ENCODE measurements at regions of chr10 and their contacts with region 1.

Region 1: DNA sequence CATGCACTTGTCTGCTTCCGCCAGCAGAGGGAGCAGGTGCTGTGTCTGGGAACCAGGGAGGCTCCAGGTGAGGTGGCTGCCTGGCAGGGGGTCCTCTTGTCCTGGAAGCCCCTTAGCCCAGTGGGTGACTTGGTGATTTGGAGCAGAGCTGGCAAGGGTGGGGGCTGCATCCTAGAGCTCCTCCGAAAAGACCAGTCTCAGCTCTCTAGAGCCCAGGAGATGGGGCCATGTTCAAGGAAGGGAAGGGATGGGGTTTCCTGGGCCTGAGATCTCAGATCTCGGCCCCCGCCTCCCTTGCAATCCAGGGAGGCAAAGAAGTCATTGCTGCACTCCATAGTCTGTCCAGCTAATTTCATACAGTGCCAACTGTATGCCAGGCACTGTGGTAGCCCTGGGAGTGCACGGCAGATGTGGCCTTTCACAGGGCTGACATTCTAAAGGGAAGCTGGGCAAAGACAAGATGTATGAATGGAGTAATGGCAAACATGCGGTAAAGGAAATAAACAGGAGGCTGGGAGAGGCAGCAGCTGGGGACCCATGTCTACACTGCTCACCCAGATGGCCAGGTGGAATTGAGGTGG is 20.4 kb upstream of the SFRP5 start:
- DNase-seq: peak; percentile 64
- H3K4me3 ChIP-seq: no peak overlapping the region
- H3K27ac ChIP-seq: no peak overlapping the region
- H3K4me1 ChIP-seq: no peaks in the 10 kb centered on the region
- H3K27me3 ChIP-seq: peaks cover 11% of the 10 kb centered on the region

Region 2: DNA sequence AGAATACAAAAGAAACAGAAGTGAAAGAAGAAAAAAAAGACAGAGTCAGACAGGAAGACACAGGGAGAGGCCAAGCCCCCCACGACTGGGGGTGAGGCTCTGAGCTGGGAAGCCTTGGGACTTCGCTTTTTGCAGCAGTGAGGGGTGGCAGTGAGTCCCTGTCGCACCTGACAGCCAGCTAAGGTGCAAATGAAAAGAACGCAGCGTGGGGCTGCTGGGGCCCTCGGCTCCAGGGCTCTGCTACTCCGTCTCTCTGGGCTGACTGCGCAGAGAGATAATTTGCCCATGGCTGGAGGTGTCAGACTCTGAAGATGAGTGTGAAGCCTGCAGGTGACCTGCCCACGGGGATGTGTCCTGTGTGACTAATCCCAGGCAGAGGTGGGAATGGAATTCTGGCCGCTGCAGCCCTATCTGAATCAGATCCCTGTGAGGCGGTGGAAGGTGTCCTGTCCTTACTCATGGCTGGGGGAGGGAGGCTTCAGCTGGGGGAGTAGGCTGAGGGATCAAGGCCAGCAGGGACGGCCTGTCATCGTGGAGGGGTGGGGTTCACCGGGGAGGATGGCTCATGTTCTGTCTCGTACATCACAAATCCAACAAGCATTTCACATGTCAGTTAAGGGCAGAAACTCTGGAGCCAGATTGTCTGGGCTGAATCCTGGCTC is 702.9 kb before region 1 on chr10:
- in situ Hi-C with region 1: no loop called
- DNase-seq: peak; percentile 51
- H3K4me3 ChIP-seq: no peak overlapping the region
- H3K27ac ChIP-seq: no peak overlapping the region
- H3K4me1 ChIP-seq: no peaks in the 10 kb centered on the region
- H3K27me3 ChIP-seq: peaks cover 14% of the 10 kb centered on the region

Region 3: DNA sequence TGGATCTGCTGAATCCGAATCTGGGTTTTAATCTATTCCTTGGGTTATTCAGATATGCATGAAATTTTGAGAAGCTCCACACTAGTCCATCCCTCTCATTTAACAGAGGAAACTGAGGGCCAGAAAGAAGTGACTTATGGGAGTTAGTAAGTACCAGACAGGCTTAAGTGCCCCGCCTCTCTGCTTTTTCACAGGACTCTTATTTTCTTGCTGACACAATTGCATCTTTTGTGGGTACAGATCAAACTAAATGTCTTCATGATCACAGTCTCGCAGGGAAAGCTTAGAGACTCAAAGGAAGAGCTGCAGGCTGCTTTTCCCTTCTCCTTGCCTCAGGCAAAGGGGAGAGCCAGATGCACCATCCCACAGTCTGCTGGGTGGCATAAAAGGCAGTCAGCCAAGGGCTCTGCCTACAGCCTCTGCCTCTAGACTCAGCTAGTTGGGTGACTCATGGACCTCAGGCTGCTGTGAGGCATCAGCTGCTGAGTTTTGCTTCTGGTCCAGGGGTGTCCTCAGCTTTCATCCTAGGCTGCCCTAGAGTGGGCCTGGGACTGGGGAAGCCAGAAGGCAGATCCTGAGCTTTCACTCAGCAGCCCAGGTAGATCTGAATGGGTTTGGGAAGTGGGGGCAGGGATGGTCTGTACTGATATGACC is 69.0 kb after region 1 on chr10:
- in situ Hi-C with region 1: loop called (anchors 5 kb)
- DNase-seq: peak; percentile 95
- H3K4me3 ChIP-seq: no peak overlapping the region
- H3K27ac ChIP-seq: no peak overlapping the region
- H3K4me1 ChIP-seq: no peaks in the 10 kb centered on the region
- H3K27me3 ChIP-seq: peaks cover 33% of the 10 kb centered on the region; the same call in 1 of the 2 replicates

Region 4: DNA sequence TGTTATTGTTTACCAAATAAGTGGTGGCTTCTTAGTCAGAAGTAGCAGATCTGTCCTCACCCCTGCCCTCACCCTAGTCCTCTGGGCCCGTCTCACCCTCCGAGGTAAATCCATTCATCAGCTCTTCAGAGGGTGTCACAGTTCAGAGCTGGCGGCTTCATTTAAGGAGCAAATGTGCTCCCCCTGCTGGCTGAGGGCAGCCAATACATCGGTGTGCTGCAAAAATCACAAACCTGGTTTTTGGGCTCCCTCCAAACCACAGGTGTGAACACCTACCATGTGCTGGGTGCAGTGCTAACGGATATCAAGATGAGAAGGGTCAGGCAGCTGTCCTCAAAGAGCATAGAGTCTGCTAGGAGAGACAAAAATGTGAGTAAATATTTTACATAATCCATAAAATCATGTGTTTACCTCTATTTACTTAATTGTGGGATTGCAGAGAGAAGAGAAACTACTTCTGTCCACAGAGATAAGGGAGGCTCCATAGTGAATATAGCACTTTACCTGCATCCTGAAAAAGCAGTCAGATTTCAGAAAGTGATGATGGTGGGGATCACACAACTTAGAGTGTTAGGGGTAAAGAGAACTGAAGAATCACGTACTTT is 253.7 kb after region 1 on chr10:
- in situ Hi-C with region 1: loop called (anchors 25 kb)
- DNase-seq: peak; percentile 68
- H3K4me3 ChIP-seq: no peak overlapping the region
- H3K27ac ChIP-seq: no peak overlapping the region
- H3K4me1 ChIP-seq: no peaks in the 10 kb centered on the region
- H3K27me3 ChIP-seq: peaks cover 34% of the 10 kb centered on the region